Mammary epithelial cell (primary cell): ENCODE measurements at regions of chr6 and their contacts with region 1.

Region 1: DNA sequence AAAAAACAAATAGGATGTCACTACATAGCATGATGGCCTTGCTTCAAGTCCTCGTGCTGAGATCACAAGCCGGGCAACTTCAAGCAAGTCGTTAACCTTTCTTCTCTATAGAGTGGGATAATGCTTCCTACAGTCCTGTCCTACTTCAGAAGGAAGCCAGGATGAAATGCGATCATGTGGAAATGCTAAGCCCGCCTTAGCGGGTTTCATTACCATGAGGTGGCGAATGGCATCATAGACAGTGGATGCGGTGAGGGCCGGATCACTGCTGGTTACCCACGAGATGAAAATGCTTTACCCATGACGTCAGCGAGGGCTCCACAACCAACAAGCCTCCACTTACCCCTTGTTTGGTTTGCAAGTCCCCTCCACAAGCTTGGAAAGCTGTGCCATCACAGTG is 206.4 kb downstream of the TBXT start:
- DNase-seq: no peak
- H3K4me3 ChIP-seq: no peak overlapping the region
- H3K27ac ChIP-seq: no peak overlapping the region
- H3K4me1 ChIP-seq: no peaks in the 10 kb centered on the region
- H3K27me3 ChIP-seq: no peaks in the 10 kb centered on the region
- CTCF ChIP-seq: no peak

Region 2: GRCh38 chr6:165376100-165376499 is 585.1 kb before region 1 on chr6:
- CTCF ChIA-PET with region 1: no interaction called
- dilution Hi-C with region 1: no loop called
- in situ Hi-C with region 1: no loop called
- intact Hi-C with region 1: no loop called
- DNase-seq: no peak
- H3K4me3 ChIP-seq: no peak overlapping the region
- H3K27ac ChIP-seq: no peak overlapping the region
- H3K4me1 ChIP-seq: no peaks in the 10 kb centered on the region
- H3K27me3 ChIP-seq: no peaks in the 10 kb centered on the region
- CTCF ChIP-seq: no peak

Region 3: DNA sequence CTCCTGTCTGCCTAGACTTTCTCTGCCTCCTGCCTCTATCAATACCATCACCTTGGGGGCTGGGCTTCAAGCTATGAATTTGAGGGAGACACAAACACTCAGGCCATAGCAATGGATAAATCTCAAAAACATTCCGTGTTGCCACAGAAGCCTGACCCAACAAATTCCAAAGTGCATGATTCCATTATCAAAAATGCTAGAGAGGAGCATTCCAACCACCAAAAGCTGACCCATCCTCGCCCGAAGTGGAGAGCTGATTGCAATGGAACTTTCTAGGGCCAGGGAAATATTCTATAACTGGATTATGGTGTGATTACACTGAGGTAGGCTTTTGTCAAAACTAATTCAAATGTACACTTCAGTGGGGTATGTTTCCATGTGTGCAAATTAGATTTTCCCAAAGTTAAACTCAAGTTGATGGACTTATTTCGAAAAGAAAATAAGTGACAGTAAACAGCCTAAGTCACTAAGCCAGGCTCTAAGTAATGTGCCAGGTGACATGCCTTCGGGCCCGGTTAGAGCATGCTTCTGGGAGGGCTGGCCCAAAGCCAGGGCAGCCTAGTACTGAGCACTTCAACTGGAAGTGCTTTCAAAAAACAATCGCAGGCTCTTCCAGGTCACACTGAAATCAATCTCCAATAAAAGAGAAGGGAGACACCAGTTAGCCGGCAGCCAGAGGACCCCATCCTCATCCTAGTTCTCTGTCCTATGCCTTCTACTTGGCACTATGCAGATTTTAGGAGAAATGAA is 64.1 kb after region 1 on chr6:
- CTCF ChIA-PET with region 1: no interaction called
- dilution Hi-C with region 1: loop called (anchors 5 kb)
- in situ Hi-C with region 1: no loop called
- intact Hi-C with region 1: no loop called
- DNase-seq: no peak
- H3K4me3 ChIP-seq: no peak overlapping the region
- H3K27ac ChIP-seq: no peak overlapping the region
- H3K4me1 ChIP-seq: no peaks in the 10 kb centered on the region
- H3K27me3 ChIP-seq: no peaks in the 10 kb centered on the region
- CTCF ChIP-seq: no peak

Region 4: DNA sequence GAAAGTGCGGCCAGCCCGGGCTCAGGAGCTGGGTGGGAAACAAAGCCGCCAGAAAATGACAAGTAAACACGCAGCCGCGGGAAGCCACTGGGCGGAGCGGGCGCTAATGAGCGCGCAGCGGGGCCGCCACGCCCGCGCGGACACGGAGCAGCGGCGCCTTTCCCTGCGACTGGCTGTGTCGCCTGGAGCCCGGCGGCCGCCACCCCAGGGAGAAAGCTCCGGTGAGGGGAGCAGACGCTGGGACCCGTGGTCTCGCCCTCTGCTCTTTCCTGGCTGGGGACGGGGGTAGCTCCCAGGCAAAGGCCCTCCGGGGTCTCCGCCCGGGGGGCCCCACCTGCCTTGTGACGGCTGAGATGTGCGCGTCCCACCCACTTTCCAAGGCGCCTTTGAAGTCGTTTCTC is 292.0 kb after region 1 on chr6:
- CTCF ChIA-PET with region 1: no interaction called
- dilution Hi-C with region 1: no loop called
- in situ Hi-C with region 1: no loop called
- intact Hi-C with region 1: no loop called
- DNase-seq: no peak
- H3K4me3 ChIP-seq: no peak overlapping the region
- H3K27ac ChIP-seq: no peak overlapping the region
- H3K4me1 ChIP-seq: no peaks in the 10 kb centered on the region
- H3K27me3 ChIP-seq: peaks cover 11% of the 10 kb centered on the region
- CTCF ChIP-seq: no peak